ENCODE measurements at regions of chr17 and their contacts with region 1.

Region 1: GRCh38 chr17:52128721-52129120 is 29.8 kb downstream of the CA10 start:
- DNase-seq: no peak
- H3K4me3 ChIP-seq: no peak overlapping the region
- H3K27ac ChIP-seq: no peak overlapping the region
- H3K4me1 ChIP-seq: no peaks in the 10 kb centered on the region
- H3K27me3 ChIP-seq: no peaks in the 10 kb centered on the region
- CTCF ChIP-seq: no peak
- EP300 ChIP-seq: no peak
- POLR2A ChIP-seq: no peak

Region 2: GRCh38 chr17:52035336-52035915 is 93.3 kb before region 1 on chr17:
- in situ Hi-C with region 1: no loop called
- intact Hi-C with region 1: no loop called
- DNase-seq: no peak
- H3K4me3 ChIP-seq: no peak overlapping the region
- H3K27ac ChIP-seq: no peak overlapping the region
- H3K4me1 ChIP-seq: no peaks in the 10 kb centered on the region
- H3K27me3 ChIP-seq: no peaks in the 10 kb centered on the region
- CTCF ChIP-seq: no peak
- EP300 ChIP-seq: no peak
- POLR2A ChIP-seq: no peak

Region 3: GRCh38 chr17:52170963-52171572 is 42.3 kb after region 1 on chr17:
- in situ Hi-C with region 1: loop called in 1 of 4 experiments (anchors 5 kb)
- intact Hi-C with region 1: no loop called
- DNase-seq: no peak
- H3K4me3 ChIP-seq: no peak overlapping the region
- H3K27ac ChIP-seq: no peak overlapping the region
- H3K4me1 ChIP-seq: no peaks in the 10 kb centered on the region
- H3K27me3 ChIP-seq: no peaks in the 10 kb centered on the region
- CTCF ChIP-seq: peak in 3 of 5 experiments; percentile 26 to 38 (median 30)
- EP300 ChIP-seq: no peak
- POLR2A ChIP-seq: no peak

Region 4: DNA sequence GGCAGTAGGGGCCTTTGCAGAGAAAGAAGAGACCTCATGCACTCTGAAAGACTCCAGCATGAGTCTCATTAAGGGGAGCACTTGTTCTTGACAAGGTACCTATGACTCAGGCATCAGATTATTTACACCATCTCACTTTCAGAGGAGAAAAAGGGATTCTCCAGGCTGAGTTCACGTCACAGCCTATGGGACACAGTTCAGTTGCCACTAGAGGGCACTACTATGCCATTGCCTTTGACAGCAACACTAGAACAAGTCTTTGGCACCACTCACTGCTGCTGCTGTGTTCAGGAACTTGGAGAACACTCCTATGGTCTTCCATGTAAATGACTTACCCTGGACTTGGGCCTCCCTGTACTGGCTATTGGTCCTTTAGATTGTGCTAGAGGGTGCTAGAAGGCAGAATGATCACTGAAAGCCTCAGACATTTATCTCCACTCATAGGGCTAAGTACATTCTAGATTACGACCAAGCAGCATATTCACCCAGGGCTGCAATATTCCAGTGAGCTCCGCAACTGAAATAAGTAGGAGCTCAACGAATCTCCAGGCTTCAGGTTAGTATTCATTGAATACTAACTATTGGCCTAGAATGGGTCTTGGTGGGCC is 254.9 kb after region 1 on chr17:
- in situ Hi-C with region 1: no loop called
- intact Hi-C with region 1: no loop called
- DNase-seq: peak; percentile 60
- H3K4me3 ChIP-seq: no peak overlapping the region
- H3K27ac ChIP-seq: no peak overlapping the region
- H3K4me1 ChIP-seq: peaks cover 0 to 15% (median 2%) of the 10 kb centered on the region in 4 donors
- H3K27me3 ChIP-seq: no peaks in the 10 kb centered on the region
- CTCF ChIP-seq: peak; percentile 40 to 65 (median 61)
- EP300 ChIP-seq: no peak
- POLR2A ChIP-seq: no peak

Measured in transverse colon (tissue), 4 donors.